ENCODE measurements at regions of chr17 and their contacts with region 1.

Region 1: GRCh38 chr17:8435245-8436168 is at the start of gene NDEL1:
- DNase-seq: peak; percentile 97
- ATAC-seq: peak; percentile 97
- H3K4me3 ChIP-seq: peak within 1 kb of the TSS; percentile 77
- H3K27ac ChIP-seq: peak within 1 kb of the TSS; percentile 90
- H3K4me1 ChIP-seq: no peaks in the 10 kb centered on the region
- H3K27me3 ChIP-seq: no peaks in the 10 kb centered on the region
- CTCF ChIP-seq: no peak
- POLR2A ChIP-seq: peak; percentile 98
- RAD21 ChIP-seq: no peak
- total RNA-seq, gene NDEL1: 28.9 and 40.3 TPM in 2 replicates

Region 2: GRCh38 chr17:8383143-8383822 is 52.2 kb before region 1 on chr17 and contains the start of gene RPL26:
- CTCF ChIA-PET with region 1: interaction called, 3 read pairs
- POLR2A ChIA-PET with region 1: interaction called, 4 read pairs
- dilution Hi-C with region 1: no loop called
- in situ Hi-C with region 1: no loop called
- intact Hi-C with region 1: loop called (anchors 1 kb)
- DNase-seq: peak; percentile 98
- ATAC-seq: peak; percentile 86
- H3K4me3 ChIP-seq: peak within 1 kb of the TSS; percentile 98
- H3K27ac ChIP-seq: peak within 1 kb of the TSS; percentile 89
- H3K4me1 ChIP-seq: peaks cover 14% of the 10 kb centered on the region
- H3K27me3 ChIP-seq: no peaks in the 10 kb centered on the region
- CTCF ChIP-seq: peak; percentile 84
- POLR2A ChIP-seq: peak; percentile 99
- RAD21 ChIP-seq: peak; percentile 28; the same call in 1 of the 2 replicates
- total RNA-seq, gene RPL26: 5,013 and 5,721 TPM in 2 replicates

Region 3: GRCh38 chr17:9557161-9557755 is 1121.8 kb after region 1 on chr17:
- CTCF ChIA-PET with region 1: no interaction called
- POLR2A ChIA-PET with region 1: interaction called, 11 read pairs
- dilution Hi-C with region 1: no loop called
- in situ Hi-C with region 1: no loop called
- intact Hi-C with region 1: no loop called
- DNase-seq: peak; percentile 13
- ATAC-seq: no peak
- H3K4me3 ChIP-seq: no peak overlapping the region
- H3K27ac ChIP-seq: no peak overlapping the region
- H3K4me1 ChIP-seq: peaks cover 2% of the 10 kb centered on the region; the same call in 1 of the 2 replicates
- H3K27me3 ChIP-seq: no peaks in the 10 kb centered on the region
- CTCF ChIP-seq: no peak
- POLR2A ChIP-seq: no peak
- RAD21 ChIP-seq: no peak

Measured in IMR-90 (cell line).